Naive thymus-derived CD4-positive, alpha-beta T cell (primary cell): ENCODE measurements at regions of chrX and their contacts with region 1.

Region 1: GRCh38 chrX:1391707-1392375 is at the start of gene SLC25A6:
- DNase-seq: peak; percentile 97 to 100 (median 100)
- ATAC-seq: peak; percentile 96
- H3K4me3 ChIP-seq: peak within 1 kb of the TSS; percentile 94
- H3K4me3 Mint-ChIP-seq: peak within 1 kb of the TSS; percentile 78 to 95 (median 92)
- H3K27ac ChIP-seq: peak within 1 kb of the TSS; percentile 97
- H3K27ac Mint-ChIP-seq: peak within 1 kb of the TSS; percentile 84 to 98 (median 91)
- H3K4me1 ChIP-seq: peaks cover 25 to 33% of the 10 kb centered on the region in 2 donors
- H3K4me1 Mint-ChIP-seq: peaks cover 35 to 71% (median 52%) of the 10 kb centered on the region in 7 donors
- H3K27me3 ChIP-seq: no peaks in the 10 kb centered on the region
- H3K27me3 Mint-ChIP-seq: no peaks in the 10 kb centered on the region
- total RNA-seq, gene SLC25A6: 238 to 341 (median 270) TPM

Region 2: DNA sequence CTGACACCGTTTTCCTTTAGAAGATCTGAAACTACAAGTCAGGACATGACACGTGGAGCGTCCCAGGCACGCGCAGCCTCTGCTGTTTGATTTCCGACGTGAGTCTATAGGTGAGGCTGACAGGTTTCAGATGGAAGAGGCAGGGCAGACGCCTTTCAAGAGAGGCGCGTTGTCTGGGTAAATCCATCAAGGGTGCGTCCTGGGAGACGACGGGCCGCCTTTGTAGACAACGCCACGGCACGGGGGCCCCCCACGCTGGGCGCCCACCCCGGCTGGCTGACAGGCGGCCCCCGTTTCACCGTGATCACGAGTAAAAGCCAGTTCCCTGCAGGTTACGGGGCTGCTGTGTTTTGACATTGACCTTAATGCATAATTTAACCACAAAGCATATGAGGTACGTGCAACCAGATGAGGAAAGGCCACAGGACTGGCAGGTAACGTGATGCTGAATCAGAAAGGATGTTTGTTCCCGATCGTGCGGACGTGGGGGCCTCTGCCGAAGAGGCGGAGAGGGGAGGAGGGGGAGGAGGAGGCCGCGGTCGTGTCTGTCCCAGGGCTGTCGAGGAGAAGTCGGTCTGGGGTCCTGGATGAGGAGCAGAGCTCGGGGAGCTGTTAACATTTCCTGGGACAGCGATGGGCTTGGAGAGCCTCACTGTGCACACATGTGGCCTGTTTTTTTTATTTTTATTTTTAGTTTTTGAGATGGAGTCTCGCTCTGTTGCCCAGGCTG is 954.0 kb before region 1 on chrX:
- CTCF ChIA-PET with region 1: no interaction called
- POLR2A ChIA-PET with region 1: no interaction called
- intact Hi-C with region 1: loop called in 1 of 2 experiments (anchors 5 kb)
- DNase-seq: no peak
- ATAC-seq: no peak
- H3K4me3 ChIP-seq: no peak overlapping the region
- H3K4me3 Mint-ChIP-seq: peak overlapping the region in 6 of 10 donors; percentile 12 to 65 (median 54)
- H3K27ac ChIP-seq: no peak overlapping the region
- H3K27ac Mint-ChIP-seq: peak overlapping the region in 1 of 9 donors; percentile 79
- H3K4me1 ChIP-seq: no peaks in the 10 kb centered on the region
- H3K4me1 Mint-ChIP-seq: peaks cover 0 to 19% (median 8%) of the 10 kb centered on the region in 7 donors
- H3K27me3 ChIP-seq: no peaks in the 10 kb centered on the region
- H3K27me3 Mint-ChIP-seq: peaks cover 0 to 5% (median 0%) of the 10 kb centered on the region in 5 donors

Region 3: GRCh38 chrX:1323315-1323714 is 68.5 kb before region 1 on chrX:
- CTCF ChIA-PET with region 1: no interaction called
- POLR2A ChIA-PET with region 1: no interaction called
- intact Hi-C with region 1: loop called in 1 of 2 experiments (anchors 2 kb)
- DNase-seq: peak; percentile 20 to 50 (median 40)
- ATAC-seq: peak; percentile 77
- H3K4me3 ChIP-seq: no peak overlapping the region
- H3K4me3 Mint-ChIP-seq: peak overlapping the region in 2 of 10 donors; percentile 41 to 50
- H3K27ac ChIP-seq: no peak overlapping the region
- H3K27ac Mint-ChIP-seq: peak overlapping the region in 2 of 9 donors; percentile 44 to 76
- H3K4me1 ChIP-seq: no peaks in the 10 kb centered on the region
- H3K4me1 Mint-ChIP-seq: peaks cover 0 to 19% (median 4%) of the 10 kb centered on the region in 7 donors
- H3K27me3 ChIP-seq: no peaks in the 10 kb centered on the region
- H3K27me3 Mint-ChIP-seq: peaks cover 0 to 16% (median 4%) of the 10 kb centered on the region in 5 donors

Region 4: DNA sequence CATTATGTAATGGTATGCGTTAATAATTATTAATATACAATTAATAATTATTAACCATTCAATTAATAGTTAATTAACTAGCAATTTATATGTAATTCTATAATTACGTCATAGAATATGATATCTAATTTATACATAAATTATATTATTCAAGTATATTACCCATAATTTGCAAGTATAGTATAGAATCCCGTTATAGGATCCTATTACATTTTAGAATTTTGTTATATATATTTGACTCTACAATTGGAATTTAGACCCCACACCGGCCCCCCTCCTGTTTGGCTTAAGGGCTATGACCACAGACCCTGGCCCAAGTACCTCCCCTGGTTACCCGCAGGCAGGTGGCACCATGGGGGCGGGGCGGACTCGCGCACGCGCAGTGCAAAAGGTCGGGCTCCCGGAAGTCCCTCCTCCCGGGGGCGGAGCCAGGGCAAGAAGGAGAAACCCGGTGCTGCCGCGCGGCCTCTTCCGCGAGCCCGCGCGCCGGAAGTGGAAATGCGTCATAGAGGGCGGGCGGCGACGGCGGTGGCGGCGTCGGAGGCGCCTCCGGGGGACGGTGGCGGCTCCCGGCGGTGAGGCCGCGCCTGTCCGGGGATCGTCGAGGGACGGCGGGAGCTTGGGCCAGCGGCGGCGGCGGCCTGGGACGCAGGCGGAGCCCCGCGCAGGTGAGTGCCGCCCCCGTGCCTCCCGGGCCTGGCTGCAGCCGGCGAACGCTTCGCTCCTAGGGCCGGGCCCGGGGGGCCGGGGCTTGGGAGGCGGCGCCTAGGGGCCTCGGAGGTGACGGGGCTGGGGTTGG is 199.5 kb after region 1 on chrX and contains the start of gene AKAP17A:
- CTCF ChIA-PET with region 1: no interaction called
- POLR2A ChIA-PET with region 1: no interaction called
- intact Hi-C with region 1: loop called (anchors 1 kb)
- DNase-seq: peak; percentile 92 to 100 (median 99)
- ATAC-seq: peak; percentile 95
- H3K4me3 ChIP-seq: peak within 1 kb of the TSS; percentile 76
- H3K4me3 Mint-ChIP-seq: peak within 1 kb of the TSS; percentile 85 to 97 (median 91)
- H3K27ac ChIP-seq: peak within 1 kb of the TSS; percentile 91
- H3K27ac Mint-ChIP-seq: peak within 1 kb of the TSS; percentile 82 to 94 (median 91)
- H3K4me1 ChIP-seq: peaks cover 7 to 10% of the 10 kb centered on the region in 2 donors
- H3K4me1 Mint-ChIP-seq: peaks cover 5 to 50% (median 34%) of the 10 kb centered on the region in 7 donors
- H3K27me3 ChIP-seq: no peaks in the 10 kb centered on the region
- H3K27me3 Mint-ChIP-seq: no peaks in the 10 kb centered on the region
- total RNA-seq, gene AKAP17A: 75.7 to 165 (median 125) TPM

Region 5: DNA sequence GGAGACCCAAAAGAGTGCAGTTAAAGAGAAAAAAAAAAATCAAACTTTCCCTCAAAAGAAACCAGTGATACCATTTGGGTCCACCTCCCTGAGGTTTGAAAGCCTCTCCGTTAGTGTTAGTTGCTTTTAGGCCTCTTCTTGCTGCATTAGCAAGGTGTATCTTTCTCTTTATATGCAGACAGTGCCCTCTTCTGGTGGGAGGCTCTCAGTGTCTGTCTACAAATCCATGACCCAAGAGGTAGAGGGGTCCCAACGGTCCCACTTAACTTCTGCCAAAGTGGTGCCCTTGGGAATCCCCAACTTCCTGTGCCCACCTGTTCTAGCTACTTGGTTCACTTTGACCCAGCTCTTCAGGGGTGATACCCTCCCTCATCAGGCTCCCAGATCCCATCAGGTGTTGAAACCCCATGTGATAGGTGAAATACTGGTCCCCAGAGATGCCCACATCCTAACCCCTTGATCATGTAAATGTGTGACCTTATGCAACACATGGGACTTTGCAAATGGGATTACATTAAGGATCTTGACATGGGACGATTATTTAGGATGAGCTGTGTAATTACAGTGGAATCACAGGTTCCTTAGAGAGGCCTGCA is 1235.5 kb after region 1 on chrX:
- CTCF ChIA-PET with region 1: no interaction called
- POLR2A ChIA-PET with region 1: no interaction called
- intact Hi-C with region 1: loop called in 1 of 2 experiments (anchors 1 kb)
- DNase-seq: peak in 7 of 9 donors; percentile 34 to 49 (median 40)
- ATAC-seq: peak; percentile 61
- H3K4me3 ChIP-seq: no peak overlapping the region
- H3K4me3 Mint-ChIP-seq: peak overlapping the region in 3 of 10 donors; percentile 19 to 33 (median 20)
- H3K27ac ChIP-seq: no peak overlapping the region
- H3K27ac Mint-ChIP-seq: peak overlapping the region in 6 of 9 donors; percentile 28 to 100 (median 56)
- H3K4me1 ChIP-seq: peaks cover 16% of the 10 kb centered on the region in 2 donors
- H3K4me1 Mint-ChIP-seq: peaks cover 23 to 53% (median 51%) of the 10 kb centered on the region in 7 donors
- H3K27me3 ChIP-seq: no peaks in the 10 kb centered on the region
- H3K27me3 Mint-ChIP-seq: no peaks in the 10 kb centered on the region